GM13977 (cell line): ENCODE measurements at regions of chr22 and their contacts with region 1.

Region 1: GRCh38 chr22:20238536-20238900 is 29.6 kb downstream of the RTN4R start:
- DNase-seq: peak; percentile 96
- CTCF ChIP-seq: peak; percentile 83

Region 2: DNA sequence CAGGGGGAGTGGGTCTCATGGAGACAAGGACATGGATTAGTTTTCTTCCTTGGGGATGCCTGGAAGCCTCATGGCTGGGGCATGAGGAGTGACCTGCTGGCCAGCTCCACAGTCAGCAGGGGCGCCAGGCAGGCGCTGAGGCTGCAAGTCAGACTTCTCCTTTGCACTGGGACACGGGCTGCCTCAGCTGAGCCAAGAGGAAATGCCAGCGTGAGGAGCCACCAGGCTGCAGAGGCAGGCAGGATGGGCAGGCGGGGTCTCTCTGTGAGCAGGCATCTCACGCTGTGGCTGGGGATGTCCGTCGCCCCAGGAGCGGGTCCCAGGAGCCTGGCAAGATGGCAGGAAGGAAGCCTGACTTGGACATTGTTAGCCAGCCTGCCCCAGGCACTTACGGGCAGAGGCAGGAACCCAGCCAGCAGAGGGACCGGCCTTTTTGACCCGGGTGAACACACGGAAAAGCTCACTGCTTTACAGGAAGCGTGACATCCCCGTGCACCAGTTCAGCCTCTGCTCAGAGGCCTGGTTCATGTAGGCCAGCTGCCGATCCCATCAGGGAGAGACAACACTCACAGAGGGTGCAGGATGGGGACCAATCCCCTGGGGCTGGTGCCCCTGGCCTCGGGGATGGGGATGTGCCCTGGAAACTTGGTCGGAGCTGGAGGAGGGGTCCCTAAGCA is 394.0 kb before region 1 on chr22:
- in situ Hi-C with region 1: no loop called
- DNase-seq: peak; percentile 9
- CTCF ChIP-seq: no peak

Region 3: DNA sequence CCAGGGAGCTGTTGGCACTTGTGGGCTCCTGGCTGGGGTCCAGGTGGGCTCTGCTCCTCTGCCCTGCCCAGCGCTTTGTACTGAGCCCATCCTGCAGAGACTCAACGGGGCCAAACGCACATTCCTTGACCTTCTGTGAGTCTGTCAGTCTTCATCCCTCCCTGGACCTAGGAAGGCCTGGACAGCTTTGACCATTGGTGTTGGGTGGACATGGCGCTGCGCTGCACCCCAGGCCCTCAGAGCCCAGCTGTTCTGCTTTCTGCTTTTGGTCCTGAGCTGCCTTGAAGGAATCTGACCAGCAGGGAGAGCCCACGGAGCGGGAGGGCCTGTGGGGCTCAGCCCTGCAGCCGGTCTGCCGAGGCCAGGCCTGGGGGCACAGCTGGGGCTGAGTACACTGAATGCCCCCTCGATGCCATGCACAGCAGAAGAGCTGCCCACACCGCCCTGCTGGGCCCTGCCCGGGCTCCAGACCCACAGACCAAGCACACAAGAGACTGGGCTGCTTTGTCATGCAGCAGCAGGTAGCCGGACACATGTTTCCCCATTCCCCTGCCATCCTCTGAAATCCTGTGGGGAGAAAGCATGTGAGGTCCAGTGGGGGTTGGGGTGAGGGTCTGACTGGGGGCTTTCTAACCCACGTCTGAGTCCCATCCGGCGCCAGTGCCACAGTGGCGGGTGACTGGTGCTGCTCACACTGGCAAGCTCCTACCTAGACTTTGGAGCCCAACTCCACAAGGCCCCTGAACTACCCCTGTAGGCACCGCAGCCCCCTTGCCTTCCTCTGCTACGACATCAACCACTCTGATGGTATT is 63.5 kb before region 1 on chr22:
- in situ Hi-C with region 1: loop called (anchors 10 kb)
- DNase-seq: no peak
- CTCF ChIP-seq: no peak